HEK293 (cell line): ENCODE measurements at regions of chr6 and their contacts with region 1.

Region 1: DNA sequence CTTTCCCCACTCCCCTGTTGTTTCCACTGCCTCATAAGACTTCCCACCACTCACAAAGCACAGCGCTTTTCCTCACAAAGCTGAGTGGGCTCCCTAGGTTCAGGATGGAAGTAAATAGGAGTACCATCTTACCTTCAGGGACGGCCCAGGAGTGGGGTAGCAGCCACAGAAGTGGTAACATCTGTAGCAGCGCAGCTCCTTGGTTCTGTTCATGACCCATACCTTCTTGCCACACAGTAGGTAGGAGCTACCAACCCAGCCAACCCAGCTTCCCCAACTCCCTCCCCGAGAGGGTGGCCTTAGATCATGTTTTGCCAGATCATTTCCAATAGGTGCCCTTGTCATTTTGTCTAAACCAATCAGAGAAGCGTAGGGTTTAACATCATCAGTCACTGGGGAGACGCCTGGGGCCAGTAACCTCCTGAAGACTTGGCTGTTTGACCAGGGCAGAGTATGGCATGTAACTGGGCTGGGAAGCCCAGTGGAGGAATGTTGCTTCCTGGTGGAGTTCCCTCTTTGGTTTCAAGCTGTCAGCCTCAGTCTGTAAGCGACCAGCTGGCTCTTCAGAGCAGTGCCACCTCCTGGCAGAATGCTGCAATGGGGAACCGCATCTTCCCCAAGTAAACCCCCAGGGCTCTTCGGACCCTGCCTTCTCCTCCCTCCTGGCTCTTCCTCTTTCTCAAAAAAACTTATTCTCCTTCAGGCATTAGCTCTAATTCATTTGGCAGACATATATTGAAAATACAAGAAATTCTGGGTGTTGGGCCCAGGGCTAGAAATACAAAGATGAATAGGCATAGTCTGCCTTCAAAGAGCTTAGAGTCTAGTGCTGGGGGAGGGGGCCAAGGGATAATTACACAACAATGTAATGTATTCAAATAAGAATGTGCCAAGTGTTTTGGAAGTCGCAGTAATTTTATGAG is at the start of gene HLA-DMA:
- H3K4me3 ChIP-seq: no peak within 1 kb of the TSS
- H3K27ac ChIP-seq: no peak within 1 kb of the TSS
- H3K4me1 ChIP-seq: no peaks in the 10 kb centered on the region
- CTCF ChIP-seq: 0 out of 2 replicates have a peak, but pooled peaks have one; percentile 31

Region 2: DNA sequence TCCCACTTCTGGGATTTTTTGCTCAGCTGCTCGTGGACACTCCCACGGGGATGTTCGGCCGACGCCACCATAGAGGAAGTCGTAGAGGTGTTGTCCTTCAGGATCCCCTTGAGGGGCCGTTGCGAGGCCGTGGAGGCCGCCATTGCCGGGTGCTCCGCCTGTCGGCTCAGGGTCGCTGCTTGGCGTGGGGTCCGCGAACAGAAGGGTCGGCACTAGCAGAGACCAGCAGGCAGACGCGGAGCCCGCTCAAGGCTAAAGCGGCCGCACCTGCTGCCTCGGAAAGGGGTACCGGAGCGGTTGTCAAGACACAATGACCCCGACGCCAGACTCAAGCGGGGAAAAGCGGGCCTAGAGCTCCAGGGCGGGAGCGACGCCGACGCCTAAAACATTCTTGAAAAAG is 73.4 kb before region 1 on chr6:
- CTCF ChIA-PET with region 1: interaction called, 58 read pairs
- POLR2A ChIA-PET with region 1: no interaction called
- H3K4me3 ChIP-seq: no peak overlapping the region
- H3K27ac ChIP-seq: no peak overlapping the region
- H3K4me1 ChIP-seq: no peaks in the 10 kb centered on the region
- CTCF ChIP-seq: no peak

Region 3: GRCh38 chr6:32894080-32895005 is 58.7 kb before region 1 on chr6:
- CTCF ChIA-PET with region 1: interaction called, 51 read pairs
- POLR2A ChIA-PET with region 1: interaction called, 19 read pairs
- H3K4me3 ChIP-seq: peak overlapping the region; percentile 66
- H3K27ac ChIP-seq: peak overlapping the region; percentile 96
- H3K4me1 ChIP-seq: peaks cover 5% of the 10 kb centered on the region
- CTCF ChIP-seq: peak; percentile 52; the same call in 1 of the 2 replicates

Region 4: DNA sequence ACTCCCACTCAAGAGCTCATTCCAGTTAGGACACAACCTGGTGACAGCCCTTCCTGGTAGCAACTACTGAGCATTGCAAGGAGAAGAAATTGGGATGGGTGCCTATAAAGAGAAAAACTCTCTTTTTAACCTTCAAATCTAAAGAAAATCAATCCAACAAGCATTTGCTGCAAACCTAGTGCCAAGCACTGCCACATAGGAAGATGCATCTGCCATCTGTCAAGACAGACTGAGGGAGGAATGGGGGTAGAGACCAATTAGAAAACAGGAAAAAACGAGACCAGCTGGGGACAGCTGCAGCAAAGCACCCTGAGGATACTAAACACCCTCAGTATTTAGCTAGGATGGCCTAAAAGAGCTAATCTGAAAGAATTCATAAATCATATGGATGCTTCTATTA is 40.1 kb before region 1 on chr6:
- CTCF ChIA-PET with region 1: interaction called, 21 read pairs
- POLR2A ChIA-PET with region 1: no interaction called
- H3K4me3 ChIP-seq: no peak overlapping the region
- H3K27ac ChIP-seq: no peak overlapping the region
- H3K4me1 ChIP-seq: no peaks in the 10 kb centered on the region
- CTCF ChIP-seq: no peak

Region 5: DNA sequence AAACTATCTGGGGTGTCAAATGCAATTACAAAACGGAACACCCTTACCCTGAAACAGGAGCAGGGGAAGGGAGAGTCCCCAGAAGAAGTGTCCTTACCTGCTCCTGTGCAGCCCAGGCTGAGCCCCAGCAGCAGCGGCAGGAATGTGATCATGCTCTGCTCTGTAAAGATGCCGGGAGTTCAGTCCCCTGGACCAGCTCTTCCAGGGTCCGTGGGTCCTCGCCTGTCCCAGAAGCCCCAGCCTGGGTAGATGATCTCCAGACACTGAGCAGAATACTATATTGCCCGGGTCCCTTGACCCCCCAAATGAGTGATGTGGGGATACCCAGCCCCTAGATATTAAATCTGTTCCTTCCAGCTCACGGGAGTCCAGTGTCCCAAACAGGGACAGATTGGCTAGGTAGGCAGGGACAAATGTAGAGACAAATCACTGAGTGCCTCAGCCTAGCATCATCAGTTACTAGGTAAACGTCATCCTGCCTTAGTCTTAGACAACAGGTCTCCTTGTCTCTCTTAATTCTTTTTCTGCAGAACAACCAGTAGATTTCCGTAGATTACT is 12.3 kb before region 1 on chr6 and contains the start of gene HLA-DMB:
- CTCF ChIA-PET with region 1: interaction called, 109 read pairs
- POLR2A ChIA-PET with region 1: interaction called, 4 read pairs
- H3K4me3 ChIP-seq: peak within 1 kb of the TSS; percentile 57
- H3K27ac ChIP-seq: no peak within 1 kb of the TSS
- H3K4me1 ChIP-seq: no peaks in the 10 kb centered on the region
- CTCF ChIP-seq: no peak